ENCODE measurements at regions of chr7 and their contacts with region 1.

Region 1: DNA sequence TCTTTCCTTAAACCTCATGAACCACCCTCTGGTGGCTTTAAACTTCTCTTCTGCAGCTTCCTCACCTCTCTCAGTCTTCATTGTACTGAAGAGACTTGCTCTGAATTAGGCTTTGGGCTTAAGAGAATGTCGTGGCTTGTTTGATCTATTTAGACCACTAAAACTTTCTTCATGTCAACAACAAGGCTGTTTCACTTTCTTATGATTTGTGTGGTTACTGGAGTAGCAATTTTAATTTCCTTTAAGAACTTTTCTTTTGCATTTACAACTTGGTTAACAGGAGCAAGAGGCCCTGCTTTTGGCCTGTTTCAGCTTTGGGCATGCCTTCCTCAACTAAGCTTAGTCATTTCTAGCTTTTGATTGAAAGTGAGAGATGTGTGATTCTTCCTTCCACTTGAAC is 38.1 kb upstream of the CDHR3 start:
- DNase-seq: no peak
- H3K4me3 Mint-ChIP-seq: no peak overlapping the region
- H3K27ac Mint-ChIP-seq: peak overlapping the region; percentile 56
- H3K4me1 Mint-ChIP-seq: peaks cover 18% of the 10 kb centered on the region
- H3K27me3 Mint-ChIP-seq: peaks cover 12% of the 10 kb centered on the region

Region 2: DNA sequence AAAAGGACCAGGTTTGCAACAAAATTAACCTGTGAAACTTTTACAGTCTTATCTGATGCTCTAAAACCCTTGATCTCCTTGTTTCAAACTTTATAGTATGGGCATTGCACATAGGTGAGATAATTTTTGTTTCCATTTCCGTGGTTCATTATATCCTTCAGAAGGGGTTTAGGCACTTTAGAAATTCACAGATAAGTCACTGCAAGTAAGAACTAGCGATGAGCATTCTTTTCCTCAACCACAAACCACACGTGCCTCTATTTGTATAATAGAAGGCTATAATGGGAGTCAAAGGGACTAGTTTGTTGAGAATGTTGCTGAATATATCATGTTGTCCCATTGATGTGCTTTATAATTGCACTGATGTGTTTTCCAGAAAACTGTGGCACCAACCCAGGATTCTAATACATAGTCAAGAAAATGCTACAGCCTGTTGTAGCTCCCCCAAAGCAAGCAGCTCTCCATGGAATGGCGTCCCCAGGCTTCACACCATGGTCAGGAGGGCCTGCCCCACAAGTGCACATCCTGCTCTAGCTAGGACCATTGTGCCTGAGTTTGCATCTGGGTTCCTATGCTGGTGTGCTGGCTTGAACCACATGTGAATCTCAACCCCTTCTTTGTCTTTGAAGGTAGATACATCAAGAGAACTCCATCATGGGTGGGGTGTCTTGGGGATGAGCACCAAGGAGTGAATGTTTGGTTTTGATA is 34.5 kb before region 1 on chr7:
- intact Hi-C with region 1: loop called (anchors 1 kb)
- DNase-seq: no peak
- H3K4me3 Mint-ChIP-seq: no peak overlapping the region
- H3K27ac Mint-ChIP-seq: no peak overlapping the region
- H3K4me1 Mint-ChIP-seq: peaks cover 10% of the 10 kb centered on the region
- H3K27me3 Mint-ChIP-seq: peaks cover 9% of the 10 kb centered on the region